SK-N-SH (cell line): ENCODE measurements at regions of chr7 and their contacts with region 1.

Region 1: GRCh38 chr7:41175435-41175834 is 527.5 kb downstream of the INHBA start:
- DNase-seq: no peak
- H3K4me3 ChIP-seq: no peak overlapping the region
- H3K27ac ChIP-seq: no peak overlapping the region
- H3K4me1 ChIP-seq: peaks cover 0 to 3% of the 10 kb centered on the region in 2 experiments; a peak in 1 of 4 replicates
- H3K27me3 ChIP-seq: no peaks in the 10 kb centered on the region
- CTCF ChIP-seq: no peak
- EP300 ChIP-seq: no peak
- RAD21 ChIP-seq: no peak

Region 2: GRCh38 chr7:41164440-41164839 is 11.0 kb before region 1 on chr7:
- CTCF ChIA-PET with region 1: interaction called, 14 read pairs
- POLR2A ChIA-PET with region 1: no interaction called
- DNase-seq: no peak
- H3K4me3 ChIP-seq: no peak overlapping the region
- H3K27ac ChIP-seq: peak overlapping the region in 1 of 2 experiments; percentile 65; a peak in 1 of 4 replicates
- H3K4me1 ChIP-seq: no peaks in the 10 kb centered on the region
- H3K27me3 ChIP-seq: no peaks in the 10 kb centered on the region
- CTCF ChIP-seq: no peak
- EP300 ChIP-seq: no peak
- RAD21 ChIP-seq: no peak

Region 3: GRCh38 chr7:41292487-41292886 is 117.1 kb after region 1 on chr7:
- CTCF ChIA-PET with region 1: no interaction called
- POLR2A ChIA-PET with region 1: no interaction called
- DNase-seq: no peak
- H3K4me3 ChIP-seq: no peak overlapping the region
- H3K27ac ChIP-seq: no peak overlapping the region
- H3K4me1 ChIP-seq: no peaks in the 10 kb centered on the region
- H3K27me3 ChIP-seq: no peaks in the 10 kb centered on the region
- CTCF ChIP-seq: no peak
- EP300 ChIP-seq: no peak
- RAD21 ChIP-seq: no peak